ENCODE measurements at regions of chr2 and their contacts with region 1.

Region 1: DNA sequence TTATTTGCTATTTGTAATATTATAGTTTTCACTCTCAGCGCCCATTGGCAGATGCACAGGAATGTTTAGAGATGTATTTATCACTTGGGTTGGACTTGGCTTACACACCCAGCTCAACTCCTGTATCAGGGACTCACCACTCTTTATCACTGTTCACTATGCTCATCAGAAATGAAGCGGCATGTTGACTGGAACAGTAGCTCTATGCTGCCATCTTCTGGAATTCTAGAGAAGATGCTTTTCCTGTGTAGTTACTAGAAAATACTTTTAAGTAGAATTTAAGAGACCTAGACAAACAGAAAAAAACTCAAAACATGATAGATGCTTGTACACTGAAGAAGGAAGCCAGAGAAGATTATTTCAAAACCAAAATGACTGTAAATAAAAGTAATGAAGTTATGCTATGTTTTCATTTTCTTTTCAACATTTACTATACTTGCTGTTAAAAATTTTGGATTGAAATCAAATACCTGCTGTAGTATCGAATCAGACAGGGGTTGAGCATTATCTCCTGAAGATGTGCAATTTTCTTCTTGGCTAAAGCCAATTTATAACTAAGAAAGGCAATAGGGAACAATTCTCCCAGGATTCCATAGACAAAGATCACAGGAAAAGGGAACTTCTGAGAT is 47.4 kb upstream of the NXPH2 start:
- DNase-seq: peak in 1 of 2 donors; percentile 70
- ATAC-seq: peak; percentile 55 to 63 (median 59)
- H3K4me3 ChIP-seq: no peak overlapping the region
- H3K4me3 Mint-ChIP-seq: no peak overlapping the region
- H3K27ac ChIP-seq: no peak overlapping the region
- H3K27ac Mint-ChIP-seq: no peak overlapping the region
- H3K4me1 ChIP-seq: no peaks in the 10 kb centered on the region
- H3K4me1 Mint-ChIP-seq: no peaks in the 10 kb centered on the region
- H3K27me3 ChIP-seq: no peaks in the 10 kb centered on the region
- H3K27me3 Mint-ChIP-seq: peaks cover 0 to 2% of the 10 kb centered on the region in 2 donors
- CTCF ChIP-seq: peak; percentile 64

Region 2: DNA sequence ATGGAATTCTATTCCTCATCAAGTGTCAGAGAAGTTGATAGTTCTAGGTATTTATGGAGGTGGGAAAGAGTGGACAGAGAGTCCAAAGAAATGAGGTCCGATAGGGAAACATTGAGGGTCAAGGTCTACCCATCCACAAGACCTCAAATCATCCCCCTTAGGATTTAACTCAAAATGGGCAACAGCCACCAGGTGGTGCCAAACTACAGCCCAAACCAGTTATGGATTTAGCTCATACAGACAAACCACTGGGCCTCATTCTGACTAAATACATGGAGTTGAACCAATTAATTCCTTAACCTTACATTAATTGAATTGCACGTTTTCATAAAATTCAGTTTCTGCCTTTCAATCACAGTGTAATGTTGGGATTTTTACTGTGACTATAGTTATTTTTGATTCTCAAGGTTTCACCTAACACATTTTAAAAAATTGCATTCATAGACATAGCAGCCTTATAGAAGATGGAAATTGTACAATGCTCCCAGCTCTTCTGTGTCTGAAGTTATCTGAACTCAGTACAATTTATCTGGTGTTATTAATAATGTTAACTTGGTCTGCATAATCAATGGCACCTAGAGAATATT is 961.5 kb before region 1 on chr2:
- intact Hi-C with region 1: loop called (anchors 1 kb)
- DNase-seq: peak in 1 of 2 donors; percentile 51
- ATAC-seq: no peak
- H3K4me3 ChIP-seq: no peak overlapping the region
- H3K4me3 Mint-ChIP-seq: no peak overlapping the region
- H3K27ac ChIP-seq: no peak overlapping the region
- H3K27ac Mint-ChIP-seq: no peak overlapping the region
- H3K4me1 ChIP-seq: no peaks in the 10 kb centered on the region
- H3K4me1 Mint-ChIP-seq: no peaks in the 10 kb centered on the region
- H3K27me3 ChIP-seq: no peaks in the 10 kb centered on the region
- H3K27me3 Mint-ChIP-seq: no peaks in the 10 kb centered on the region
- CTCF ChIP-seq: no peak

Region 3: DNA sequence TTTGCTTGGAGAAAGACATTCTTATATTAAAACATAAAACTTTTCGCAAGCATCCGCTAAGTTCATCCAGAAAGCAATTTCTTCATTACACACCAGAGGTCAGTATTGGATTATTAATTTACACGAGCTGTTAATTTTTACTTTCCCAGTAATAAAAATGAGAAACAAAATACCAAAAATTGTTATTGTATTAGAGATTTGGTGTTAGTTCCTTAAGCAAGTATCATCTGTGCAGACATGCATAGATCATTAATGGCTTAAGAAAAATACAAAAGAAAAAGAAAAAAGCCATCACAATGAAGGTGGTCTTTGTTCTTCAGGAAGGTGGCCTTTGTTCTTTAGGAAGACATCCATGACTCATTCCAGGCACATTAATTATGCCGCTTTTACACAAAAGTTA is 916.9 kb before region 1 on chr2:
- intact Hi-C with region 1: loop called (anchors 2 kb)
- DNase-seq: peak in 1 of 2 donors; percentile 6
- ATAC-seq: no peak
- H3K4me3 ChIP-seq: no peak overlapping the region
- H3K4me3 Mint-ChIP-seq: no peak overlapping the region
- H3K27ac ChIP-seq: no peak overlapping the region
- H3K27ac Mint-ChIP-seq: no peak overlapping the region
- H3K4me1 ChIP-seq: no peaks in the 10 kb centered on the region
- H3K4me1 Mint-ChIP-seq: no peaks in the 10 kb centered on the region
- H3K27me3 ChIP-seq: no peaks in the 10 kb centered on the region
- H3K27me3 Mint-ChIP-seq: peaks cover 0 to 4% of the 10 kb centered on the region in 2 donors
- CTCF ChIP-seq: peak; percentile 12

Region 4: DNA sequence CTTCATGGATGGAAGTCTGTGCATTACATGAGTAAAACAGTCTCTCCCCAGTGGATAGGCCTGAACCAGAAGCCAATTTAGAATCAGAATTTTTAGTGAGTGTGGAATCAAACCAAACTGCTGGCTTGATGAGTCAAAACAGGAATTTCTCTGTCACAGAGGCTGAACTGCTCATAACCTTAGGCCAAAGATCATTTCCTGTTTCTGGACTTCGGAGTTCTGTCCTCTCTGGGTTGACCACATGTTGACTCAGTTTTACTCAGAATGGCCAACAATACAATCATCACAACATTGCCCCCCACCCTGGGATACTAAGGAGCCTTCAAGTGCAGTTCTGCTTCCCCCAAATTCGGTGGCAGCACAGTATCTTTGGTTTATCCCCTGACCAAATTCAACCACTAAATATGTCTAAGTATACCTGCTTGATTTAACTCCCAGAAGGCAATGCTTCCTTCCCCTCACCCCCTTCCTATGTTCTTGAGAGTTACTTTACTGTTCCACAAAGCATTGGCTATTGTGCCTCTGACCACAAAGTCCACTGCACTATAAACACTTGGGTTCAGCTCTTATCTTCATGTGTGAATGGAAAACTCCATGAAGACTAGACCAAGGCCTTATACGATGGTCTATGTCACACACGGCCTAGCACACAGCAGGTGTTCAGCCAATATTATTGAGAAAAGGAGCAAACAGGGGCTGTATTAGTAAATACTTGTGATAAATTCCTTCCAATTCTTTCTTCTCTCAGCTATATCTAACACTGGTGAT is 115.1 kb before region 1 on chr2:
- intact Hi-C with region 1: no loop called
- DNase-seq: no peak
- ATAC-seq: no peak
- H3K4me3 ChIP-seq: no peak overlapping the region
- H3K4me3 Mint-ChIP-seq: no peak overlapping the region
- H3K27ac ChIP-seq: no peak overlapping the region
- H3K27ac Mint-ChIP-seq: no peak overlapping the region
- H3K4me1 ChIP-seq: no peaks in the 10 kb centered on the region
- H3K4me1 Mint-ChIP-seq: no peaks in the 10 kb centered on the region
- H3K27me3 ChIP-seq: no peaks in the 10 kb centered on the region
- H3K27me3 Mint-ChIP-seq: no peaks in the 10 kb centered on the region
- CTCF ChIP-seq: no peak

Region 5: DNA sequence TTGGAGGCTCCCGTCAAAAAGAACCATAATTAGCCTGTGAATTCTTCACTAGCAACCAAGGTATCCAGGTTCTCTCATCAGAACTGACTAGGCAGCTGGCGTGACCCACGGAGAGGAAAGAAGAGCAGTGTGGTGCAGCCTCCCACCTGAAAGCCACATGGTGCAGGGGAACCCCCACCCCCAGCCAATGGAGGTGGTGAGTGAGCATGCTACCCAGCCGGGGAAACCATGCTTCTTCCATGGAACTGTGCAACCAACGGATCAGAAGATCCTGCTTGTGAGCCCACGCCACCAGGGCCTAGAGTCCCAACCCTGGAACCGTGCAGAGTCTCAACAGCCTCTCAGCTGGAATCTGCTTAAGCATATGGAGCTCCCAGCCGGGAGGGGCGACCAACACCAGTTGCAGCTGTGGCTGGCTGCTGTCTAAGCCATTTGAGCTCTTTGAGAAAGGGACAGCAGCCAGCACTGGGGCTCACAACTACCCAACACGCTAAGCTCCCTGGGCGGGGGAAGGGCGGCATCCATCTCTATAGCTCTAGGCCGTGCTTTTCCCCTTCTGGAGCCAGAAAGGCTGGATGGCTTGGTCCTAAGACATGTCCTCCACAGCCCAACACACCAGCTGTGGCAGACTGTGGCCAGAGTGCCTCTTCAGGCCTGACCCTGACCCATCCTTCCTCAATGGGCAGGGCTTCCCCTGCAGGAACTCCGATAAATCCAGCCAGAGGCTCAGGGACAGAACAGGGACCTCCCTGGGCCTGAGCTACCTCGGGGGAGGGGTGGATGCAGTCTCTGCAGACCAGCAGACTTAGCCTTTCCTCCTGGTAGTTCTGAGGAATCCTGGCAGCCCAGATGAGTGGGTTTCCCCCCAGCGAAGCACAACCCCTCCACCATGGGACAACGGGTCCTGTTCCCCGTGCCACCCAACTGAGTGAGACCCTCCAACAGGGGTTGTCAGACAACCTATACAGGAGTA is 104.0 kb after region 1 on chr2:
- intact Hi-C with region 1: no loop called
- DNase-seq: no peak
- ATAC-seq: no peak
- H3K4me3 ChIP-seq: no peak overlapping the region
- H3K4me3 Mint-ChIP-seq: no peak overlapping the region
- H3K27ac ChIP-seq: no peak overlapping the region
- H3K27ac Mint-ChIP-seq: no peak overlapping the region
- H3K4me1 ChIP-seq: no peaks in the 10 kb centered on the region
- H3K4me1 Mint-ChIP-seq: no peaks in the 10 kb centered on the region
- H3K27me3 ChIP-seq: no peaks in the 10 kb centered on the region
- H3K27me3 Mint-ChIP-seq: no peaks in the 10 kb centered on the region
- CTCF ChIP-seq: no peak